Endothelial cell of umbilical vein (primary cell): ENCODE measurements at regions of chr5 and their contacts with region 1.

Region 1: DNA sequence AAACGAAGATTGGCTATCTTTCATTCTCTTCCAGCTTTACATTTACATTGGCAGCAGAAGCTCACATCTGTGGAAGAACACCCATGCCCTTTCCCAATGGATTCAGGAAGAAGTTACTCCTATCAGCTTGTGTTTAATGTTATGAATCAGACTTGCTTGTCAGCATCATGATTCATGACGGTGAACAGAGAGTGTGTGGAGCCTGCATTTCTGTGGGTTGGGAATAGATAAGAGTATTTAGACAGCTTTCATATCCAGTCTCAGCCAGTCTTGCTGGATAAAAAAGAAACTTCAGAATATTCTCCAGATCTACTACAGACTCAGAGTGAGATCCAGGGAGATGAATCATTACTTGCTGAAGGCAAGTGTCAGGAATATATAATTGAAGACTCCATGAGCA is 812.9 kb upstream of the ZNF608 start:
- DNase-seq: peak; percentile 99
- H3K4me3 ChIP-seq: peak overlapping the region in 1 of 3 experiments; percentile 13
- H3K27ac ChIP-seq: peak overlapping the region; percentile 51
- H3K4me1 ChIP-seq: peaks cover 17% of the 10 kb centered on the region
- H3K27me3 ChIP-seq: no peaks in the 10 kb centered on the region
- CTCF ChIP-seq: no peak
- POLR2A ChIP-seq: peak; percentile 74

Region 2: DNA sequence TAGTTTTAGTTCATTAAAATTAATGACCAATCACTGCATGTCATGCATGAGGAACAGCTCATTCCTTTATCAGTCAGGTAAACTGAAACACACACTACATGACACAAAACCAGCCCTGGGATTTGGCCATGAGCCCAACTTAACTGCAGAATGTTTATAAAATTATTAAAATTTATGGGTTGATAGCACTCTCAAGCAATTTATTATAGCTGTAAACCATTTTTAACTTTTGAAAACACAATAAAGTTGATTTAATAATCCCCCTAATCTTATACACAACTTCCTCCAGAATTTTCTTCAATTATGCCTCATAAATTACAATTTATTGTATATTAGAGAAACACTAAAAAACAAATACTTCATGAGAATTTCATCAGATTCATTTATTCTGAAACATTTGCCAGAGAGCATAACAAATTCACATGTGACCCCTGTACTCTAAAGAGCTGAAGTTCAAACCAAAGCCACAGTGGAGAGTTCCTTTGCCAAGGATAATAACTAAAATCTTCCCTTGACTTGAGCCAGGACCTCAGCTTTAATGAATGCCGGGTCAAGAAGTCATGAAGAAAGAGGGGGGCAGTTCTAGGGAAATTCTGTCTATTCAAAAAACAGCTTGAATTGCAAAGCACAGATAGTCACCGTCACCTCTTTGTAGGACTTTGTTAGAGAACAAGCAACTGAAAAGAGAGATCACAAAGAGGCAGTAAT is 100.2 kb after region 1 on chr5:
- CTCF ChIA-PET with region 1: interaction called, 4 read pairs
- POLR2A ChIA-PET with region 1: no interaction called
- dilution Hi-C with region 1: no loop called
- intact Hi-C with region 1: loop called (anchors 5 kb)
- DNase-seq: peak; percentile 79
- H3K4me3 ChIP-seq: peak overlapping the region in 1 of 3 experiments; percentile 21
- H3K27ac ChIP-seq: peak overlapping the region; percentile 81
- H3K4me1 ChIP-seq: peaks cover 22% of the 10 kb centered on the region
- H3K27me3 ChIP-seq: no peaks in the 10 kb centered on the region
- CTCF ChIP-seq: no peak
- POLR2A ChIP-seq: no peak

Region 3: DNA sequence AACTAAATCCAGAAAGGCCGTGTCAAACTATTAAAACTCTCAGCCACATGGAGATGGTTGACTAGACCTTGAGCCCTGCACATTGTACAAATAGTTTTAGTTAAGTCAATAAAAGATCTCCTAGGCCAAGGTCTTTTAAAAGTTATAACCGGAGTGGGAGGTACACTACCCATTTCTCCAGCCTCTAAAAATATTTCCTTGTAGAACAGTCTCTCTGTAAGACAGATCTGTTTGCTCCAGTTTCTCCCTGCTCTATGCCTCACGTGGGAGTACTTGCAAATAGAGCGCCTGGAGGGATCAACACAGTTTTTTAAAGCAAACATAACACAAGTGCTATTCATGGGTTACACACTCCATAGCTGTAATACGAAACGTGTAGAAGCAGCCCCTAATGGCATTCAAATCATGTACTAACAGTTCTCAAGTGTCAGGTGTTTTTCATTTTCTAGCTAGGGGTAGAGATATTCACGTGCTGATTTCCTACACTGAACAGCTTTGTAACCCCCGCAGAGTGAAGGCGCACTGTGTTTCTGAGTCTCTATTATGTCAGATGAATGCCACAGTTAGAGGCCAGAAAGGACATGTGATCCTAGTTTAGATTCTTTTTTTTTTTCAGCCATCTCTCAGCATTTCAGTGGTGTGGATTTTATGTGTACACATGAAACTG is 160.5 kb after region 1 on chr5:
- CTCF ChIA-PET with region 1: no interaction called
- POLR2A ChIA-PET with region 1: no interaction called
- dilution Hi-C with region 1: no loop called
- intact Hi-C with region 1: no loop called
- DNase-seq: no peak
- H3K4me3 ChIP-seq: no peak overlapping the region
- H3K27ac ChIP-seq: no peak overlapping the region
- H3K4me1 ChIP-seq: no peaks in the 10 kb centered on the region
- H3K27me3 ChIP-seq: no peaks in the 10 kb centered on the region
- CTCF ChIP-seq: no peak
- POLR2A ChIP-seq: no peak